HepG2 (cell line): ENCODE measurements at regions of chr19 and their contacts with region 1.

Region 1: GRCh38 chr19:1355568-1356507 is 27.9 kb upstream of the NDUFS7 start:
- DNase-seq: no peak
- ATAC-seq: no peak
- H3K4me3 ChIP-seq: peak overlapping the region; percentile 56 to 97 (median 87)
- H3K27ac ChIP-seq: no peak overlapping the region
- H3K4me1 ChIP-seq: peaks cover 22% of the 10 kb centered on the region
- H3K27me3 ChIP-seq: no peaks in the 10 kb centered on the region
- CTCF ChIP-seq: no peak
- EP300 ChIP-seq: no peak
- POLR2A ChIP-seq: no peak
- RAD21 ChIP-seq: no peak

Region 2: GRCh38 chr19:1113033-1113985 is 242.5 kb before region 1 on chr19:
- CTCF ChIA-PET with region 1: no interaction called
- POLR2A ChIA-PET with region 1: no interaction called
- in situ Hi-C with region 1: no loop called
- intact Hi-C with region 1: no loop called
- DNase-seq: peak; percentile 89
- ATAC-seq: peak; percentile 82
- H3K4me3 ChIP-seq: peak overlapping the region in 2 of 3 experiments; percentile 29 to 60; a peak in 4 of 6 replicates
- H3K27ac ChIP-seq: peak overlapping the region; percentile 80
- H3K4me1 ChIP-seq: peaks cover 15% of the 10 kb centered on the region
- H3K27me3 ChIP-seq: no peaks in the 10 kb centered on the region; a peak in 1 of 5 replicates
- CTCF ChIP-seq: peak; percentile 99
- EP300 ChIP-seq: peak in 1 of 2 experiments; percentile 37; a peak in 1 of 4 replicates
- POLR2A ChIP-seq: peak; percentile 46 to 75; a peak in 3 of 4 replicates
- RAD21 ChIP-seq: peak; percentile 95

Region 3: DNA sequence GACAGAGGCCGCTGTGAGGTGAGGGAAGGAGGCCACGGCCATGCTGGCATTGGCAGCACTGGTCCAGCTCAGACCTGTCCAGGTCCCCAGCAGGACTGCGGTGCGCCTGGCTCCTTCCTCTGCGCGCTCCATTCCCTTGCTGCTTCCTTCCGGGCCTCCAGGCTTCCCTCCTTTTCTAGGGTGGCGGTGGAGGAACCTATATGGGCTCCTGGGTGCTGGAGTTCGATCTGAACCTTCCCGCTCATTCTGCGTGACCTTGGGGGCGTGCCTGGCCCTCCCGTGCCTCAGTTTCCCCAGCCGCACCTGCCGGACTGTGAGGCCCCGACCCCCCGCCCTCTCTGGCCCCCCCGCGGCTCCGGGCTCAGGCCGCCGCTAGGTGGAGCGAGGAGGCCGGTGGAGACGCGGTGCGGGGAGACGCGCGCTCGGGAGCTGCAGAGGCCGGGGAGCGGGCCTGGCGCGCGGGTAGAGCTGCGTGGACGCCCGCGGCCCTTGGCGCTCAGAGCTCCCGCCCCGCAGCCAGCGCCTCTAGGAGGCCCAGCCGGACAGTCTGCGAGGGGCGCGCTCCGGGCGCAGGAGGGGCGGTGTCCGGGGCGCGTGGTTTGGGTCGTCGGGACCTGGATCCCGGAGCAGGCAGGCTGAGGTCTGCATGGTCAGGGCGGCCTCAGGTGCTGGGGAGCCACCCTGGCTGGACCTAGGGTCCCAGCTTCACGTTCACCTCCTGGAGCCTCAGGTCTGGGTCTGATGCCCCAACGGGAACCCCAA is 40.2 kb before region 1 on chr19:
- CTCF ChIA-PET with region 1: no interaction called
- POLR2A ChIA-PET with region 1: interaction called, 4 read pairs
- in situ Hi-C with region 1: no loop called
- intact Hi-C with region 1: loop called (anchors 5 kb)
- DNase-seq: no peak
- ATAC-seq: peak; percentile 64
- H3K4me3 ChIP-seq: peak overlapping the region in 2 of 3 experiments; percentile 43 to 67; a peak in 3 of 6 replicates
- H3K27ac ChIP-seq: no peak overlapping the region
- H3K4me1 ChIP-seq: peaks cover 60% of the 10 kb centered on the region
- H3K27me3 ChIP-seq: peaks cover 8 to 55% of the 10 kb centered on the region in 2 experiments
- CTCF ChIP-seq: peak; percentile 88
- EP300 ChIP-seq: no peak
- POLR2A ChIP-seq: no peak
- RAD21 ChIP-seq: peak; percentile 89